Right lobe of liver (tissue), 6 donors: ENCODE measurements at regions of chr13 and their contacts with region 1.

Region 1: DNA sequence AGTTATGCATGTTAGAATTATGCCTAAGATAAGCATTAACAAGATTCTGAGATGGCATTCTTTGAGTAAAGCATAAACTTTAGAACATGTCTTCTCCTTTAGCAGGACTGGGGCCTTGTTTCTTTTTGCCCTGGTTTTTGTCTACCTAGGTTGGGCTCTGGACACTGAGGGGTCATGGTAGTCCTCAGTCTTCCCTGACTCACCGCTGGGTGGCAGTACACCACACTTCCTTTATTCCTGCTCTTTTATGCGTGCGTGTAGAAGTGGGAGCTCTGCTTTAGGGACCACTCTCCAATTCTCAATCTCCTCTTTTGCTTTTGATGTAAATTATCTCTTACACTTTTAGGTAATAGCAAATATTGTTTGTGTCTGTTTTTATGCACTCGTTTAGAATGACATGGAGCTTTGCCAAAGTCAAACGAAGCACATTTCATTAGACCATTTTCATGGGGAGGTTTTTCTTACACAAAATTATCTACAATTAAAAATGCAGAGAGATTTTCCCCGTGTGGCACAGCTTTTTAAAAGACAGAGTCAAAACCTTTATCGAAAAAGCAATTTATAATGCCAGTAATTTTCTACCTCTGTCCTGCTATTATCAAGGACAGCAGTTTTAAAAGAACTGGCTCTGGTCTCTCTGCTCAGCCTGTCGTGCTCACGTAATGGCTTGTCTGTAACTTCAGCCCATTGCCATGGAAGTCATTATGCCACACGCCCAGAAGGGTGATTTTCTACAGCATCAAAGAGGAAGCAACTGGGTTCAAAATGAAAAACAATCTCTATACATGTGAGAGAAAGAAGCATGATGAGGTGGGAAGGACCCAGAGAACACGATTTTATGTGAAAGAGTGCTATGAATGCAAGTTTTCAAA is 413.9 kb downstream of the COG6 start:
- DNase-seq: peak; percentile 67 to 77 (median 71)
- ATAC-seq: peak; percentile 89 to 93 (median 90)
- H3K4me3 ChIP-seq: peak overlapping the region in 1 of 3 donors; percentile 17
- H3K27ac ChIP-seq: peak overlapping the region in 1 of 3 donors; percentile 13
- H3K4me1 ChIP-seq: peaks cover 0 to 11% (median 5%) of the 10 kb centered on the region in 4 donors
- H3K27me3 ChIP-seq: no peaks in the 10 kb centered on the region
- CTCF ChIP-seq: peak; percentile 86 to 90 (median 89)
- POLR2A ChIP-seq: no peak

Region 2: DNA sequence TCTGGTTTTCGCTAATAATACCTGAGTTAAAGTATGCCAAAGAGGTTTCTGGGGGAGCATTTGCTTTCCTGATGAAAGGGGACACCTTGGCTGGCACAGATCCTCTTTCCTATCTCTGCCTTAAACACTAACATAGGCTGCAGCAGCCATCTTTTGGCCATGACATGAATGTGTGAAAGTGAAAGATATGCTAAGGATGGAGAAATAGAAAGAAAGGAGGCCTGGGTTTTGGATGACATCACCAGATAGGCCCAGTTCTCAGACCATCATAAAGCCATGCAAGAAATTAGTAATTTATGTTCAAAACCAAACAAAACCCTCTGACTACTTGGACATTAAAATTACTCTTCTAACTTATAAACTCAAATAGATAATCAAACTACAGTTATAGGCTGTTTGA is 134.3 kb before region 1 on chr13:
- intact Hi-C with region 1: no loop called
- DNase-seq: no peak
- ATAC-seq: no peak
- H3K4me3 ChIP-seq: no peak overlapping the region
- H3K27ac ChIP-seq: no peak overlapping the region
- H3K4me1 ChIP-seq: no peaks in the 10 kb centered on the region
- H3K27me3 ChIP-seq: no peaks in the 10 kb centered on the region
- CTCF ChIP-seq: no peak
- POLR2A ChIP-seq: no peak

Region 3: DNA sequence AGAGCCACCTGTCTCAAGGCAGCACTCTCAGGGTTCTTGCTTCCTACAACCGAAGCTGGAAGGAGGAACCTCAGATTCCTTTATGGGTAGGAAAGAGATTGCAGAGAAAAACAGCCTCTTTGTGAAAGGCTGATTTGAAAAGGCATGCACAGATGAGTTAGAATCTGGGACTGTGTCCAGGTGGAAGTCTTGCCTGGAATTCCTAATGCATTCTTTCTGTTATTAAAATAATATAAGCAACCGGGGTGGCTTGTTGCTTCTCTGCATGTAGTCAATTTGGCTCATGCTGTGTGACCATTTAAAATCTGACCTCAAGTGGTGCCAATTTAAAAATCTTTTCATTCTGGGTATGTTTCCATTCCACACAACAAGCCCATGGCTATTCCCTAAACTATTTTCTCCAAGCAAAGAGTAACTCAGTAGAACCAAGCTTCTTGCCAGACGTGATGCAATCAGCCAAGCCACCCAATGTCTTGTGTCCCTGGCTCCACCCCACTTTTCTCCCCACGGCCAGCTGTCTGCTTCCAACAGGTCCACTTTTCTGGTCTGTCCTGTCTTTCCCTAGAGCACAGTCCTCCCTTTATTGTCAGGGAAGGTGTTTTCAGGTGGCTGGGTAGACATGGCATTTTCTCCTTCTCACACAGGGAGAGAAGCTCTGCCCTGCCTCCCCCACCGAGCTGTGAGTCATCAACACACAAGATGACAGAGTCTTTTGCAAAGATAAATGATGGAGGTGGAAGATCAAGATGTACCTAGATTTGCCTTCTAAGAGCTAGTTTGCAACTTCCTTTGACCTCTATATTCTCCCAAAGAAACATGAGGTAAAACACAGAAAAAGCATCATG is 202.7 kb after region 1 on chr13:
- intact Hi-C with region 1: no loop called
- DNase-seq: no peak
- ATAC-seq: no peak
- H3K4me3 ChIP-seq: no peak overlapping the region
- H3K27ac ChIP-seq: no peak overlapping the region
- H3K4me1 ChIP-seq: no peaks in the 10 kb centered on the region
- H3K27me3 ChIP-seq: no peaks in the 10 kb centered on the region
- CTCF ChIP-seq: no peak
- POLR2A ChIP-seq: no peak

Region 4: GRCh38 chr13:40682449-40683240 is 613.2 kb after region 1 on chr13:
- intact Hi-C with region 1: loop called in 1 of 2 experiments (anchors 10 kb)
- DNase-seq: no peak
- ATAC-seq: peak; percentile 48 to 65 (median 64)
- H3K4me3 ChIP-seq: no peak overlapping the region
- H3K27ac ChIP-seq: no peak overlapping the region
- H3K4me1 ChIP-seq: no peaks in the 10 kb centered on the region
- H3K27me3 ChIP-seq: no peaks in the 10 kb centered on the region
- CTCF ChIP-seq: peak; percentile 66 to 70 (median 67)
- POLR2A ChIP-seq: no peak

Region 5: GRCh38 chr13:41222259-41222852 is 1152.9 kb after region 1 on chr13:
- intact Hi-C with region 1: no loop called
- DNase-seq: peak in 1 of 3 donors; percentile 58
- ATAC-seq: peak; percentile 92 to 95 (median 94)
- H3K4me3 ChIP-seq: no peak overlapping the region
- H3K27ac ChIP-seq: no peak overlapping the region
- H3K4me1 ChIP-seq: no peaks in the 10 kb centered on the region
- H3K27me3 ChIP-seq: no peaks in the 10 kb centered on the region
- CTCF ChIP-seq: peak; percentile 71 to 89 (median 76)
- POLR2A ChIP-seq: no peak